Endothelial cell of umbilical vein (primary cell): ENCODE measurements at regions of chr9 and their contacts with region 1.

Region 1: GRCh38 chr9:129460323-129461261 is 160.3 kb downstream of the C9orf50 start:
- DNase-seq: peak; percentile 96
- H3K4me3 ChIP-seq: peak overlapping the region in 2 of 3 experiments; percentile 16 to 18
- H3K27ac ChIP-seq: peak overlapping the region; percentile 98
- H3K4me1 ChIP-seq: peaks cover 11% of the 10 kb centered on the region
- H3K27me3 ChIP-seq: no peaks in the 10 kb centered on the region
- CTCF ChIP-seq: no peak
- POLR2A ChIP-seq: no peak

Region 2: DNA sequence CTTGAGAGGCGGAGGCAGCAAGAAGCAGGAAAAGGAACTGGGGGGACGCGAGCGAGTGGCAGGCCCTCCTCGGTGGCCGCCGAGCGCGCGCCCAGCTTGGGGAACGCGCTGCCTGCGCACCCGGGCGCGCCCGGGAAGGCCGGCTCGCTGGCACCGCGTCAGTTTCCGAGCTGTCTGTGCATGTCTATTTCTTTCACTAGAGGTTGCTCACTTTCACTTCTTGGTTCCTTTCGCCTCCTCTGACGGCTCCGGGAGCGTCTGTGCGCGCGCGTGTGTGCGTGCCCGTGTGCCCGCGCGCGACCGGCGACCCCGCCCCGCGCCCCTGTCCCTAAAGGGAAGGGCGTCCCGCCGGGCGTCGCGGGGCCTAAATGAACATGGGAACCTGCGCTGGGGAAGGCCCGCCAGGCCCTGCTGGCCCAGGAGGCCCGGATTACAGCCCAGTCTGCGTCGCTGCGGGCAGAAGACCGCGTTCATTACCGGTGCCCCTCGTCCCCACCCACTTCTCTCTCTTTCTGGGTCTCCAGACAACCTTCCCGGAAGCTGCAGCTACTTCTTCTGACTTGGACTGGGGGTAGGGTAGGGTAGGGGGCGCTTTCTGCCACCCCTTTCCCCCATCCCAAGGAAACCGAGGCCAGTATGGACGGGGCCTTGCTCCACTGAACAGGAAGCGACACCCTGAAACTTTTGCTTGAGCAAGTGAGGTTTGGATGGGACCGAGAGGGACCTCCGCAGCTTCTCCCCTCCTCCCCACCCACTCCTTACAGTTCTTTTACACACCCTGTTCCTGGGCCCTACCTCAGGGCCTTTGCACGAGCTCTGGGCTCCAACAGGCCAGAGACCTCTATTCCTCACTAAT is 76.8 kb before region 1 on chr9:
- CTCF ChIA-PET with region 1: interaction called, 5 read pairs
- POLR2A ChIA-PET with region 1: no interaction called
- dilution Hi-C with region 1: no loop called
- intact Hi-C with region 1: loop called (anchors 2 kb)
- DNase-seq: peak; percentile 47
- H3K4me3 ChIP-seq: peak overlapping the region; percentile 16 to 44 (median 38)
- H3K27ac ChIP-seq: no peak overlapping the region
- H3K4me1 ChIP-seq: peaks cover 2% of the 10 kb centered on the region
- H3K27me3 ChIP-seq: no peaks in the 10 kb centered on the region
- CTCF ChIP-seq: no peak
- POLR2A ChIP-seq: peak; percentile 29

Region 3: DNA sequence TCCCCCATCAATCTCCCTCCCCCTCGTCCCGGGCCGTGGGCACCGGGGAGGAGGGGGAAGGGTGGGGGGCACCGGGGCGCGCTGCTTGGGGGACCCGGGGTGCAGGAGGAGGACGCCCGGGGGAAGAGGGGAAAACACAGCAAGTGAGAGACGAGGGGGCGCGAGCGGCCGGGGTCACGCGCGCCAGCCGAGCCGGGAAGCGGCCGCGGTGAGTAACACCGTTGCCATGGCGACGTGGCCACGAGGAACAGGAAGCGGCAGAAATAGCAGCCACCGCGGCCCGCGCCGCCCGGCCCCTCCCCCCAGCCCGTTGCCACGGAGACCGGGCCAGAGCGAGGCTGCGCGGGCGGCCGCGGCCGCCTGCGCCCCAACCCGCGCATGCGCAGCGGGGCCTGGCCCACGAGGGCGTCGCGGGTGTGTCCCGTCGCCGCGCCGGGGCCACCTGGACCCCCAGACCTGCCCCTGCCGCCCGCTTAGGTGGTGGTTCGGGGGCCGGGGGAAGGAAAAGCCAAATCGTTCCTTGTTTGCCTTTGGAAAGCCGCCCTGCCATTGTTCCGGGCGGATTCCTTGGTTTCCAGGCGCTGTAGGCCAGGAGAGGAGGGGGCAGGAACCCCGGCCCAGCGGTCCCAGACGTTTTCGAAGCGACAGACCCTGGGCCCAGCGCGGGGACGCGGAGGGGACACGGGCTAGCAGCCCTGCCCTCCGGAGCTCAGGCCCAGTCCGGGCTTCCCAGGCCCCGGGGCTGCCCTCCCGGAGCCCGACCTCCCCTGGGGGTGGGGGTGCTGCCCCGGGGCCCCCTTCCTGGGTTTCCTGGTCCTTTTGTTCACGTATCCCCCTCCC is 46.8 kb before region 1 on chr9:
- CTCF ChIA-PET with region 1: no interaction called
- POLR2A ChIA-PET with region 1: no interaction called
- dilution Hi-C with region 1: no loop called
- intact Hi-C with region 1: loop called (anchors 1 kb)
- DNase-seq: peak; percentile 95
- H3K4me3 ChIP-seq: peak overlapping the region in 1 of 3 experiments; percentile 35
- H3K27ac ChIP-seq: peak overlapping the region; percentile 96
- H3K4me1 ChIP-seq: peaks cover 15% of the 10 kb centered on the region
- H3K27me3 ChIP-seq: no peaks in the 10 kb centered on the region
- CTCF ChIP-seq: no peak
- POLR2A ChIP-seq: peak; percentile 70

Region 4: GRCh38 chr9:129482521-129483414 is 22.2 kb after region 1 on chr9:
- CTCF ChIA-PET with region 1: interaction called, 28 read pairs
- POLR2A ChIA-PET with region 1: interaction called, 3 read pairs
- dilution Hi-C with region 1: no loop called
- intact Hi-C with region 1: loop called (anchors 1 kb)
- DNase-seq: peak; percentile 69
- H3K4me3 ChIP-seq: peak overlapping the region in 1 of 3 experiments; percentile 40
- H3K27ac ChIP-seq: peak overlapping the region; percentile 93
- H3K4me1 ChIP-seq: peaks cover 31% of the 10 kb centered on the region
- H3K27me3 ChIP-seq: no peaks in the 10 kb centered on the region
- CTCF ChIP-seq: no peak
- POLR2A ChIP-seq: no peak

Region 5: DNA sequence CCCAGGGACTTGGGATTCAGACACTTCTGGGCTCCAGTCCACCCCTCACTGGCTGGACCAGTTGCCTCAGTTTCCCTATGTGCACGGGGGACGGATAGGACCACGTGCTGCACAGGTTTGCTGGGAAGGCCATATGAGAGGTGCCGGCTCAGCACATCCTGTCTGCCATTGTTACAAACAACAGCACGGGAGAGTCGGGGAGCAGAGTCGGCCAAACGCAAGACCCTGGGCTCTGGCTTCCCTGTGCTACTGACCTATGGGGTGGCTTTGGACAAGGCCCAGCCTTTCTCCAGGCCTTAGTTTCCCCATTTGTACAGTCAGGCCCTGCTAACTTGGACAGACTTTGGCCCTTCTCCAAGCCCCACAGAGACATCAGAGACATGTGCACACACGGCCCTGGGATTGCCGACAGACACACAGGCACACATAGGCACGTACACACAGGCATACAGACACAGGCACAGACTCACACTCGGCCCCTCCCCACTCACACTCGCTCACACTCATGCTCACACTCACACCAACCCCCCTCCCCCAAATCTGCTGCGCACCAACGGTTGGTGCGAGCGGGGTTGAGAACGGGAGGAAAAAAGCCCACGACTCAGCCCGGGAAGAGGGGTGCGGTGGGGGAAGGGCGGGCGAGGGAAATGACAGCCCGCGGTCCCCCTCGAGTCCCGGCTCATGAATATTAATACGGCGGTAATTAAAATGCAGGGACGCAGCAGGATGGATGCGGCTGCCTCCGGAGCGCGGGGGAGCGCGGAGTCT is 27.2 kb after region 1 on chr9:
- CTCF ChIA-PET with region 1: interaction called, 28 read pairs
- POLR2A ChIA-PET with region 1: interaction called, 3 read pairs
- dilution Hi-C with region 1: no loop called
- intact Hi-C with region 1: loop called (anchors 1 kb)
- DNase-seq: peak; percentile 67
- H3K4me3 ChIP-seq: peak overlapping the region in 1 of 3 experiments; percentile 30
- H3K27ac ChIP-seq: peak overlapping the region; percentile 66
- H3K4me1 ChIP-seq: peaks cover 55% of the 10 kb centered on the region
- H3K27me3 ChIP-seq: no peaks in the 10 kb centered on the region
- CTCF ChIP-seq: no peak
- POLR2A ChIP-seq: peak; percentile 58